Tibial artery (tissue), 4 donors: ENCODE measurements at regions of chr7 and their contacts with region 1.

Region 1: GRCh38 chr7:92245487-92246362 is at the starts of genes ANKIB1 and KRIT1:
- DNase-seq: peak; percentile 83 to 92
- H3K4me3 ChIP-seq: peak within 1 kb of the TSS; percentile 80 to 99
- H3K27ac ChIP-seq: peak within 1 kb of the TSS; percentile 96
- H3K4me1 ChIP-seq: peaks cover 0 to 37% (median 27%) of the 10 kb centered on the region in 4 donors
- H3K27me3 ChIP-seq: no peaks in the 10 kb centered on the region
- CTCF ChIP-seq: peak; percentile 21 to 33

Region 2: GRCh38 chr7:90655566-90655965 is 1590.2 kb before region 1 on chr7:
- intact Hi-C with region 1: loop called (anchors 10 kb)
- DNase-seq: no peak
- H3K4me3 ChIP-seq: no peak overlapping the region
- H3K27ac ChIP-seq: no peak overlapping the region
- H3K4me1 ChIP-seq: peaks cover 0 to 45% (median 1%) of the 10 kb centered on the region in 4 donors
- H3K27me3 ChIP-seq: no peaks in the 10 kb centered on the region
- CTCF ChIP-seq: no peak

Region 3: GRCh38 chr7:91824201-91824600 is 421.5 kb before region 1 on chr7:
- intact Hi-C with region 1: no loop called
- DNase-seq: no peak
- H3K4me3 ChIP-seq: no peak overlapping the region
- H3K27ac ChIP-seq: no peak overlapping the region
- H3K4me1 ChIP-seq: no peaks in the 10 kb centered on the region
- H3K27me3 ChIP-seq: no peaks in the 10 kb centered on the region
- CTCF ChIP-seq: no peak

Region 4: GRCh38 chr7:92391071-92391470 is 145.3 kb after region 1 on chr7:
- intact Hi-C with region 1: no loop called
- DNase-seq: no peak
- H3K4me3 ChIP-seq: no peak overlapping the region
- H3K27ac ChIP-seq: no peak overlapping the region
- H3K4me1 ChIP-seq: no peaks in the 10 kb centered on the region
- H3K27me3 ChIP-seq: no peaks in the 10 kb centered on the region
- CTCF ChIP-seq: no peak

Region 5: GRCh38 chr7:92447345-92448204 is 201.8 kb after region 1 on chr7 and contains the start of gene GATAD1:
- intact Hi-C with region 1: loop called (anchors 5 kb)
- DNase-seq: peak; percentile 86 to 95
- H3K4me3 ChIP-seq: peak within 1 kb of the TSS; percentile 87 to 98
- H3K27ac ChIP-seq: peak within 1 kb of the TSS; percentile 93 to 96
- H3K4me1 ChIP-seq: peaks cover 0 to 11% (median 3%) of the 10 kb centered on the region in 4 donors
- H3K27me3 ChIP-seq: no peaks in the 10 kb centered on the region
- CTCF ChIP-seq: peak in 1 of 2 experiments; percentile 88

Region 6: DNA sequence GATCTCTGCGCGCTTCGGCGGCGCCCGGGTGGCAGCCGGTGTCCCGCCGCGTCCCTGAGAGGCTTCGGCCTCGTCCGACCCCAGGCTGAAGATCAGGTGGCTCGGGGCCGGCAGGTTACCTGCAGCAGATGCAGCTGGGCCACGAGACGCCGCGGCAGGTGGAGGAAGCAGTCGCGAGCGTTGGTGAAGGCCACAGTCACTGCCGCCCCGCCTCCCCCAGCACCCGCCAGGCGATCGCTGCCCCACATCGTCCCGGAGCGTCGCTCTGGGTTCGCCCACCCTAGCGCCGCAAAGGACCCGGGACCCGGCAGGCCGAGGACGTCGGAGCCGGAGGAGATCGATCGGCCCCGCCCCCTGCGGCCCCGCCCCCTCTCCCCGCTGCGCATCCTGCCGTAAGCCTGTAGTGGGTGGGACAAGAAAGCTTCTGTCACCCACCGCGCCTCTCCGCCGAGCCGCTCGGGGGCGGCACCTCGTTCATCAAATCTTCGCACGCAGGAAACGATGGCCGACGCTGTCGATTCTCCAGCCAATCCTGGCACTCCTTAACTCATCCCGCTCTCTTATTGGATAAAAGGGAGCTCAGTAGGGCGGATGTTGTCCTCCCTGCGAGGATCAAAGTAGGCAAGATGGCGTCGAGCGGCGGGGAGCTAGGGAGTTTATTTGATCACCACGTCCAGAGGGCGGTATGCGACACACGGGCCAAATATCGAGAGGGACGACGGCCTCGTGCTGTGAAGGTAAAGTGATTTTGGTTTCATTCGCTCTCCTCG is 282.6 kb after region 1 on chr7 and contains the starts of genes PEX1 and RBM48:
- intact Hi-C with region 1: loop called (anchors 2 kb)
- DNase-seq: peak; percentile 95 to 99
- H3K4me3 ChIP-seq: peak within 1 kb of the TSS; percentile 85 to 97
- H3K27ac ChIP-seq: peak within 1 kb of the TSS; percentile 83 to 91
- H3K4me1 ChIP-seq: peaks cover 0 to 27% (median 12%) of the 10 kb centered on the region in 4 donors
- H3K27me3 ChIP-seq: no peaks in the 10 kb centered on the region
- CTCF ChIP-seq: peak; percentile 15 to 30